AG04449 (cell line): ENCODE measurements at regions of chr10 and their contacts with region 1.

Region 1: GRCh38 chr10:77125231-77125630 is 512.4 kb downstream of the KCNMA1 start:
- DNase-seq: no peak
- H3K4me3 ChIP-seq: no peak overlapping the region
- CTCF ChIP-seq: no peak

Region 2: DNA sequence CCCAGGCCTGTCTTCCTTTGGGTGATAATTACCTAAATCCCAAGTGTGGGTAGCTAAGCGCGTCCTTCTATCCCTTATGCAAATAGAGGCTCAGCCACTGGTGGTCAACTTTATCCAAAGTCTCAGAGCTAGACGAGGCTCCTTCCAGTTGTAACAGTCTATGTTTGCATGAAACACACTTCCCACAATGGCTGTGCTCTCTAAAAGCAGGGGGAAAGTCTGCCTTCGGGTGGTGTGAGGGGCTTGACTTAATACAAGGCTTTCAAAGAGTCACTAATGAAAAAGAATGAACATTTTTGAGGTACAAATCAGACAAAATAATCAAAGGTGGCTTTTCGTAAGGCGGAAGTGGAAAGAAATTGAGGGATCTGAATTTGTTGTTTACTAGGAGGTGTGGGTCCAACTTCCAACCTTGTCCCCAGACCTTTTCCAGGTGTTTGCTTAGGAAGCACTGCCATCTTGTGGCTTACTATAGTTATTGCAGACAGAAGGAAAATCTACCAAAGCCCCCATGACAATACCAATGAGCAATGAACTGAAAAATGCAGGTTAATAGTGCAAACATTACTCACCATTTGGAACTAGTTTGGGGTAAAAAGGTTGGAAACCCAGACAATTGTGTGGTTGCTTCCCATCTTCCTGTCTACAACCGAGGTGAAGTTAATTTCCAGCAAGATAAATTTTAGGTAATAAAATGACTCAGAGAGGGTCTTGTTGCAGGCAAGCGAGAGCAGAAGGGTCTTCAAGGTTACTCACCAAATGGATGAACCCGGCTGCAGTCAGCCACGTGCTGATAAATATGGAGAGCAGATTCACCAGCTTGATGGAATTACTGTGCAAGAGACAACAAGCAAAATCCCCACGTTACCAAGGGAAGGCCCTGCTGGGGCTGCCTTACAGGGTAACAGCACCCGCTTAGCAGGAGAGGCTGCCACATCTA is 13.3 kb before region 1 on chr10:
- CTCF ChIA-PET with region 1: interaction called, 10 read pairs
- POLR2A ChIA-PET with region 1: no interaction called
- DNase-seq: peak; percentile 52
- H3K4me3 ChIP-seq: no peak overlapping the region
- CTCF ChIP-seq: peak; percentile 62